Heart left ventricle (tissue), 16 donors: ENCODE measurements at regions of chrX and their contacts with region 1.

Region 1: DNA sequence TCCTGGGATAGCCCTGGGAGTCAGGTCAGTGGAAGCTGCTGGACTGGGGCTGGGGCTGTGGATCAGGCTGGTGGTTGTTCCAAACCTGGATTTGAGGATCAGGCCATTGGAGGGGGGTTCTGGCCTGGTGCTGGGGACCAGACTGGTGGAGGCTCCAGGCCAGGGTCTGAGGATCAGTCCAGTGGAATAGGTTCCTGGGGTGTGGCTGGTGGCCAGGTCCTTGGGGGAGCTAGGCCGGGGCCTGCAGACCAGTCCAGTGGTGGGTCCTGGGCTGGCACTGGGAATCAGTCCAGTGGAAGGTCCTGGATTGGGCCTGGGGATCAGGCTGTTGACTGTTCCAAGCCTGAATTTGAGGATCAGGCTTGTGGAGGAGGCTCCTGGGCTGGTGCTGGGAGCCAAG is 8.0 kb downstream of the ARMCX4 start:
- DNase-seq: no peak
- ATAC-seq: no peak
- H3K4me3 ChIP-seq: no peak overlapping the region
- H3K27ac ChIP-seq: no peak overlapping the region
- H3K4me1 ChIP-seq: no peaks in the 10 kb centered on the region
- H3K27me3 ChIP-seq: no peaks in the 10 kb centered on the region
- CTCF ChIP-seq: no peak
- POLR2A ChIP-seq: no peak

Region 2: GRCh38 chrX:101450961-101451360 is 42.3 kb before region 1 on chrX:
- intact Hi-C with region 1: no loop called
- DNase-seq: peak in 2 of 5 donors; percentile 37 to 49
- ATAC-seq: peak in 3 of 4 donors; percentile 37 to 92 (median 64)
- H3K4me3 ChIP-seq: no peak overlapping the region
- H3K27ac ChIP-seq: no peak overlapping the region
- H3K4me1 ChIP-seq: peaks cover 0 to 10% (median 0%) of the 10 kb centered on the region in 12 donors
- H3K27me3 ChIP-seq: no peaks in the 10 kb centered on the region
- CTCF ChIP-seq: no peak
- POLR2A ChIP-seq: no peak

Region 3: DNA sequence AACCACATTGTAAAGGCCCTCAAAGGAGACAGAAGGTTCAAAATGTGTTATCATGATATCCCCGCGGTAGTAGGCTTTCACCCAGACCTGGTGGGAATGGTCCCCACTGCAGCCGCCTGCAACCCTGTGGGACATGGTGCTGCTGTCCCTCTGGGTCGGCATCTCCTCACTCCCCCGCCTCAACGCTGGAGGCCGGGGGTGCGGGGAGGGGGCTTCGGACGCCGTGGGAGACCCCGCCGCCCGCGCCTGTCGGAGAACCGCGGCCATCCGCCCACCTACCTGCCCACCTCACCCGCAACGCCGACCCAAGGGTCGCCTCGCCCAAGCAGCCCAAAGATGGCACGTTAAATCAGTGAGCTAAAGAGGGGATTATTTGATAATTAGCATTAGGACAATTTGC is 45.9 kb after region 1 on chrX:
- intact Hi-C with region 1: loop called in 1 of 10 experiments (anchors 5 kb)
- DNase-seq: no peak
- ATAC-seq: no peak
- H3K4me3 ChIP-seq: no peak overlapping the region
- H3K27ac ChIP-seq: no peak overlapping the region
- H3K4me1 ChIP-seq: no peaks in the 10 kb centered on the region
- H3K27me3 ChIP-seq: no peaks in the 10 kb centered on the region
- CTCF ChIP-seq: no peak
- POLR2A ChIP-seq: no peak

Region 4: GRCh38 chrX:101736651-101737050 is 243.4 kb after region 1 on chrX:
- intact Hi-C with region 1: no loop called
- DNase-seq: no peak
- ATAC-seq: no peak
- H3K4me3 ChIP-seq: no peak overlapping the region
- H3K27ac ChIP-seq: no peak overlapping the region
- H3K4me1 ChIP-seq: no peaks in the 10 kb centered on the region
- H3K27me3 ChIP-seq: no peaks in the 10 kb centered on the region
- CTCF ChIP-seq: no peak
- POLR2A ChIP-seq: no peak